ENCODE measurements at regions of chrX and their contacts with region 1.

Region 1: GRCh38 chrX:9899640-9900111 is 67.5 kb upstream of the CLDN34 start:
- DNase-seq: no peak
- ATAC-seq: no peak
- H3K4me3 ChIP-seq: no peak overlapping the region
- H3K27ac ChIP-seq: no peak overlapping the region
- H3K4me1 ChIP-seq: peaks cover 0 to 15% of the 10 kb centered on the region in 2 experiments; a peak in 3 of 4 replicates
- H3K27me3 ChIP-seq: no peaks in the 10 kb centered on the region
- CTCF ChIP-seq: no peak
- POLR2A ChIP-seq: no peak
- RAD21 ChIP-seq: no peak

Region 2: GRCh38 chrX:10014462-10015356 is 115.0 kb after region 1 on chrX:
- CTCF ChIA-PET with region 1: no interaction called
- POLR2A ChIA-PET with region 1: no interaction called
- RAD21 ChIA-PET with region 1: no interaction called
- intact Hi-C with region 1: loop called (anchors 10 kb)
- DNase-seq: peak; percentile 37
- ATAC-seq: peak; percentile 88
- H3K4me3 ChIP-seq: peak overlapping the region; percentile 29 to 46
- H3K27ac ChIP-seq: peak overlapping the region; percentile 45; the same call in 1 of the 2 replicates
- H3K4me1 ChIP-seq: peaks cover 6 to 30% of the 10 kb centered on the region in 2 experiments
- H3K27me3 ChIP-seq: no peaks in the 10 kb centered on the region
- CTCF ChIP-seq: no peak
- POLR2A ChIP-seq: no peak
- RAD21 ChIP-seq: no peak